ENCODE measurements at regions of chr1 and their contacts with region 1.

Region 1: GRCh38 chr1:185646202-185646683 is 87.9 kb upstream of the HMCN1 start:
- DNase-seq: peak; percentile 95
- ATAC-seq: peak; percentile 87
- H3K4me3 ChIP-seq: peak overlapping the region; percentile 45
- H3K27ac ChIP-seq: peak overlapping the region; percentile 57
- H3K4me1 ChIP-seq: peaks cover 19% of the 10 kb centered on the region
- H3K27me3 ChIP-seq: no peaks in the 10 kb centered on the region
- CTCF ChIP-seq: no peak

Region 2: GRCh38 chr1:185595835-185596667 is 50.2 kb before region 1 on chr1:
- CTCF ChIA-PET with region 1: no interaction called
- POLR2A ChIA-PET with region 1: no interaction called
- intact Hi-C with region 1: loop called (anchors 2 kb)
- DNase-seq: peak; percentile 64
- ATAC-seq: peak; percentile 60
- H3K4me3 ChIP-seq: no peak overlapping the region
- H3K27ac ChIP-seq: no peak overlapping the region
- H3K4me1 ChIP-seq: peaks cover 4% of the 10 kb centered on the region; the same call in 1 of the 2 replicates
- H3K27me3 ChIP-seq: no peaks in the 10 kb centered on the region
- CTCF ChIP-seq: peak; percentile 78